ENCODE measurements at regions of chr2 and their contacts with region 1.

Region 1: GRCh38 chr2:118861731-118862130 is 14.3 kb upstream of the EN1 start:
- DNase-seq: no peak
- ATAC-seq: no peak

Region 2: GRCh38 chr2:118046634-118047210 is 815.0 kb before region 1 on chr2:
- intact Hi-C with region 1: loop called (anchors 5 kb)
- DNase-seq: no peak
- ATAC-seq: no peak

Measured in left ventricle myocardium superior (tissue), 1 donor.